Activated CD4-positive, alpha-beta memory T cell treated with anti-CD3 and anti-CD28 coated beads for 36 hours (primary cell): ENCODE measurements at regions of chr6 and their contacts with region 1.

Region 1: DNA sequence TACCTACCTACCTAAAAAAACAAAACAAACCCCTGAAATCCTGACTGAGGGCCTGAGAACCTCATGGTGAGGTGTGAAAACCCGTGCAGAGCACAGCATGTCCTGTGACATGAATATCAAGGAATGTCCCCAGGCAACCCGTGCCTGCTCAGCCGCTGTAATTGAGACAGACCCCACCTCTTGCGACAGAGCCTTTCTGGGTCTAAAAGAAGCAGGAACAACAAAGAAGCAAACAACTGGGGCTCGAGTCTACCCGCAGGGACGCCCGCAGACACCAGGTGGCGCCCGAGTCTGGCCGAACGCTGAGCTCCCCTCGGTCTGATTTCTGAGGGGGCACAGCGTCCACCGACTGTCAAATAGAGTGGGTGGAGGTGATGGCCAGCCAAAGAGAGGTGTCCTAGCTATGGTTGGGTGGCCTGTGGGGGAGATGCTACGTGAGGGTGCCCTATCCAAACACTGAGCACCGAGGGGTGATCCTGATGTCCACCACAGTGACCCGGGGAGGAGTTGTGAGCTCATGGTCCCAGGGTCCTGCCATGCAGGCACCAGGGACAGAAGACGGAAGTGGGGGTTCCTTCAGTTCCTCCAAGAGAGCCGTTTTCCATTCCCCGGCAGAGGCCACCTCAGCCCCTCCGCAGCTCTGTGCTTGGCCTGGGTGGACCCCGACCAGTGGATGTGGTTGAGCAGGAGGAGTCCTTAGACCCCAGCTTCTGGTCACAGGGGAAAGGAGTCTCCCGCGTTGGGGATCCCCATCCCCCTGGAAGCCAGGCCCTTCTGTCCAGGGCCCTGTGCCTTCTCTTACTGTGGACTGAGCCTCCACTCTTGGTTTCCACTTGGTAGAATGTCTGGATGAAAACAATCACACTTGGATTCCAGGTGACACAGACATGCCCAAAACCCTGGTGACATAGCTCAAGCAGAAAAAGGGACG is 268.2 kb downstream of the CDC5L start:
- DNase-seq: peak; percentile 85
- H3K4me3 Mint-ChIP-seq: peak overlapping the region; percentile 24
- H3K27ac Mint-ChIP-seq: peak overlapping the region; percentile 76
- H3K4me1 Mint-ChIP-seq: peaks cover 9% of the 10 kb centered on the region
- H3K27me3 Mint-ChIP-seq: no peaks in the 10 kb centered on the region

Region 2: GRCh38 chr6:44630125-44631028 is 25.3 kb before region 1 on chr6:
- CTCF ChIA-PET with region 1: interaction called, 35 read pairs
- POLR2A ChIA-PET with region 1: interaction called, 4 read pairs
- intact Hi-C with region 1: no loop called
- DNase-seq: peak; percentile 66
- H3K4me3 Mint-ChIP-seq: no peak overlapping the region
- H3K27ac Mint-ChIP-seq: no peak overlapping the region
- H3K4me1 Mint-ChIP-seq: peaks cover 15% of the 10 kb centered on the region
- H3K27me3 Mint-ChIP-seq: no peaks in the 10 kb centered on the region

Region 3: DNA sequence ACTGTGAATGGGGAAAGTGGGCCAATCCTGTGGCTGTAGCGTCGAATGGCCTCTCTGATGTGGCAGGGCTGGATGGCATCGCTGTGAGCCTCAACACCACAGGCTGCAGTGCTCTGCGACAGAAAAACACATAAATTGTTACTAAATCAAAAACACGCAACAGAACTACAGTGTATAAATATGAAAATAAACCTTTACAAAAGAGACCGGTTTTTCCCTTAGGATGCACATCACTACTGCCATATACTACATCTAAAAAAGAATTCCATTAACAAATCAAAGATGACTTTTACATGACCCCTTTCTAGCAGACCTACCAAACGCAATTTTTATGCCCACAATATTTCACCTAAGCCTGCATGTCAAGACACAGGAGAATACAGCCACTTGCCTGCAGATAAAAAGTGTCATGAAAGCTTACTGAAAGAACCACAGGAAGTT is 277.0 kb after region 1 on chr6:
- CTCF ChIA-PET with region 1: interaction called, 3 read pairs
- POLR2A ChIA-PET with region 1: no interaction called
- intact Hi-C with region 1: loop called (anchors 5 kb)
- DNase-seq: peak; percentile 43
- H3K4me3 Mint-ChIP-seq: peak overlapping the region; percentile 80
- H3K27ac Mint-ChIP-seq: peak overlapping the region; percentile 88
- H3K4me1 Mint-ChIP-seq: peaks cover 41% of the 10 kb centered on the region
- H3K27me3 Mint-ChIP-seq: no peaks in the 10 kb centered on the region

Region 4: DNA sequence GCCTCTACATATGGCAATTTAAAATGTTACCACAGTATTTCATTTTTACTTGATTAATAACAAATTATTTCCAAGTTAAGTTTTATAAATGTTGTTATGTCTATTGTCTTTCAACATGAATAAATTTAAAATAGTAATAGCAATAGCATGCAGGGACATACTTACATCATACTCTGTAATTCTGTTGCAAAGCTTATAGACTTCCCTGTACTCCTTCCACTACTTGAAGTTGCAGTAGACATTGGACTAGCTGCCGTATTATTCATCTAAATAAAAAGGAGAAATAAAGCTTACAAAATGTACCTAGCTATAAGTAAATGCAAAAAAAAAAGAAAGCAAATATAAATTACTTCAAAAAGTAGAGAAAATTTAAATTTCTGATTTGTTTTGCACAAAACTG is 709.4 kb after region 1 on chr6:
- CTCF ChIA-PET with region 1: interaction called, 10 read pairs
- POLR2A ChIA-PET with region 1: no interaction called
- intact Hi-C with region 1: no loop called
- DNase-seq: no peak
- H3K4me3 Mint-ChIP-seq: no peak overlapping the region
- H3K27ac Mint-ChIP-seq: no peak overlapping the region
- H3K4me1 Mint-ChIP-seq: peaks cover 5% of the 10 kb centered on the region
- H3K27me3 Mint-ChIP-seq: no peaks in the 10 kb centered on the region

Region 5: DNA sequence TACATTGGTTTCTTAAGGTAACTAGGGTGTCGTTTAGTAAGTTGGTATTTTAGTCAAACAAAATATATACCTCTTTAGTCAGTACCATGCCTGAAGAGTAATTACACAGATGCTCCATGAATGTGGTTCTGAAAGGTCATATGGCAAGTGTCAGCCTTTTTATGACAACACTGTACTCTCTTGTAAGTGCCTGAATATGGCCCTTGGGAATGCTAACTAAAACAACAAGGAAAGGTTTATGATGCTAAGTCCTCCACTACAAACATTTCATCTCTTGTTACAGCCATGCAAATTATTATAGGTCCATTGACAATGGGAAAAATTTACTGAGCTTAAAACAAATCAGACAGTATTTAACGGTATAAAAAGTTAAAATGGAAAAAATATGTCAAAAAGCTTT is 761.0 kb after region 1 on chr6:
- CTCF ChIA-PET with region 1: interaction called, 11 read pairs
- POLR2A ChIA-PET with region 1: interaction called, 3 read pairs
- intact Hi-C with region 1: loop called (anchors 2 kb)
- DNase-seq: no peak
- H3K4me3 Mint-ChIP-seq: no peak overlapping the region
- H3K27ac Mint-ChIP-seq: no peak overlapping the region
- H3K4me1 Mint-ChIP-seq: peaks cover 46% of the 10 kb centered on the region
- H3K27me3 Mint-ChIP-seq: peaks cover 2% of the 10 kb centered on the region